ENCODE measurements at regions of chr19 and their contacts with region 1.

Region 1: GRCh38 chr19:10653715-10654492 is at the start of gene ILF3:
- DNase-seq: peak; percentile 100
- ATAC-seq: peak; percentile 80
- H3K4me3 ChIP-seq: peak within 1 kb of the TSS; percentile 67 to 100 (median 96)
- H3K4me3 Mint-ChIP-seq: peak within 1 kb of the TSS; percentile 98
- H3K27ac ChIP-seq: peak within 1 kb of the TSS; percentile 99 to 100
- H3K27ac Mint-ChIP-seq: peak within 1 kb of the TSS; percentile 100
- H3K4me1 ChIP-seq: peaks cover 28 to 35% of the 10 kb centered on the region in 2 donors
- H3K4me1 Mint-ChIP-seq: peaks cover 42% of the 10 kb centered on the region
- H3K27me3 ChIP-seq: no peaks in the 10 kb centered on the region
- H3K27me3 Mint-ChIP-seq: no peaks in the 10 kb centered on the region
- CTCF ChIP-seq: no peak
- total RNA-seq, gene ILF3: 359 and 378 TPM in 2 replicates

Region 2: DNA sequence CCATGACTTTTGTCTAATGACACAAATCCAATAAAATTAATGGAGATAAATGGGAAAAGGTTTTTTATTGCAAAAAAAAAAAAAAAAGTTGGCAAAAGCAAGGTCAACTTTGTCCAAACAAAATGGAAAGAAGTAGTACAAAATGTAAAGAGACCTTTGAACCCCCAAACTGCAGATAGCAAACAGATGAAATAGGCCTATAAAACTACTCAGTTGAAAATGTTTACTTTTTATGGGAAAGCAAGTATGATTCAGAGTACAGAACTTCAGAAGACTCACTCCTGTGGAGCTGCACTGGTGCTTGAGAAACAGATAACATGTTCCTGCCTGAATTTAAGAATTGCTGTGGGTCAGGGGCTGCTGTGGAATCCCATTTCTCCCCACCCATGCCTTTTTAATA is 1300.9 kb before region 1 on chr19:
- CTCF ChIA-PET with region 1: no interaction called
- POLR2A ChIA-PET with region 1: no interaction called
- intact Hi-C with region 1: no loop called
- DNase-seq: no peak
- ATAC-seq: no peak
- H3K4me3 ChIP-seq: no peak overlapping the region
- H3K4me3 Mint-ChIP-seq: no peak overlapping the region
- H3K27ac ChIP-seq: no peak overlapping the region
- H3K27ac Mint-ChIP-seq: no peak overlapping the region
- H3K4me1 ChIP-seq: no peaks in the 10 kb centered on the region
- H3K4me1 Mint-ChIP-seq: no peaks in the 10 kb centered on the region
- H3K27me3 ChIP-seq: no peaks in the 10 kb centered on the region
- H3K27me3 Mint-ChIP-seq: no peaks in the 10 kb centered on the region
- CTCF ChIP-seq: no peak

Region 3: DNA sequence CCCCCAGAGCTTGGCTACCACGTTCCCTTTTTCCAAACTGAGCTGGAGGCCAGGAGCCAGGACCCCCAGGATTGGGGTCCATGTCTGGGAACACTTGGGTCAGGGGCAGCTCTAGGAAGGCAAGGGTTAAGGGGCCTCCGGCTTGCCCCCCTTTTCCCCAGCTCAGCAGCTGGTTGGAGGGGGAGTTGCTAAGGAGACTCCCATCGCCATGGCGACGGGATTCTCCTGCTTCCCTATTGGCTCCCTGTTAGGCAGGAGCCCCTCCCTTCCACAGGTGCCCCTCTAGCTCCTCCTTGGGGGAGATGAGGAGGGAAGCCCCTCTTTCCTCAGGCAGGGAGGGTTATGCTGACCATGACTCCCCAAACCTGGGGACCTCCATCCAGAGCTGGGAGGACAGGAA is 199.6 kb before region 1 on chr19:
- CTCF ChIA-PET with region 1: no interaction called
- POLR2A ChIA-PET with region 1: no interaction called
- intact Hi-C with region 1: no loop called
- DNase-seq: no peak
- ATAC-seq: no peak
- H3K4me3 ChIP-seq: no peak overlapping the region
- H3K4me3 Mint-ChIP-seq: no peak overlapping the region
- H3K27ac ChIP-seq: no peak overlapping the region
- H3K27ac Mint-ChIP-seq: no peak overlapping the region
- H3K4me1 ChIP-seq: no peaks in the 10 kb centered on the region
- H3K4me1 Mint-ChIP-seq: no peaks in the 10 kb centered on the region
- H3K27me3 ChIP-seq: peaks cover 0 to 9% (median 0%) of the 10 kb centered on the region in 4 experiments
- H3K27me3 Mint-ChIP-seq: peaks cover 9% of the 10 kb centered on the region
- CTCF ChIP-seq: no peak

Region 4: DNA sequence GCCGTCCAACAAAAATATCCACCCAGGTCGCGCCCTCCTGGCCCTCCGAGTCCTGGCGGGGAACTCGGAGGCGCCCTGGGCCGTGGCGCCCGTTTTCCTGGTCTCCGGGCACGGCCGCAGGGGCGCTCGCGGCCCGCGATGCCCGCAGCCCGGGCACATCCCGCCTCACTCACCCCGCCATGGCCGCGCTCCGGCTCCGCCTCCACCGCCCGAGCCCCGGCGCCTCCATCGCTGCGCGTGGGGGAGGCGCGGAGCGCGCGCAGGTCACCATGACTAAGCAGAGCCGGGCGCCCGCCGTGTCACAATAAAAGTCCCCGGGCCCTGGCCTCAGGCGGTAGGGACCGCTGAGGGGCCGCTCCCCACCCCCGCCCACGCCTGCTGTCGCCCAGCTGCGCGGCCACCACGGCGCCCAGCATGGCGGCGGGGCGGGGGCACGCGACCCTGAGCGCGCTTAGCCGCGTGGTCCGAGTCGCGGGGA is 151.3 kb before region 1 on chr19:
- CTCF ChIA-PET with region 1: no interaction called
- POLR2A ChIA-PET with region 1: no interaction called
- intact Hi-C with region 1: loop called (anchors 1 kb)
- DNase-seq: peak; percentile 87
- ATAC-seq: peak; percentile 87
- H3K4me3 ChIP-seq: peak overlapping the region in 4 of 5 experiments; percentile 72 to 87 (median 78)
- H3K4me3 Mint-ChIP-seq: peak overlapping the region; percentile 88
- H3K27ac ChIP-seq: peak overlapping the region; percentile 63 to 69
- H3K27ac Mint-ChIP-seq: peak overlapping the region; percentile 85
- H3K4me1 ChIP-seq: peaks cover 6 to 18% of the 10 kb centered on the region in 2 donors
- H3K4me1 Mint-ChIP-seq: peaks cover 22% of the 10 kb centered on the region
- H3K27me3 ChIP-seq: no peaks in the 10 kb centered on the region
- H3K27me3 Mint-ChIP-seq: no peaks in the 10 kb centered on the region
- CTCF ChIP-seq: no peak

Region 5: GRCh38 chr19:10679743-10680142 is 25.8 kb after region 1 on chr19:
- CTCF ChIA-PET with region 1: no interaction called
- POLR2A ChIA-PET with region 1: no interaction called
- intact Hi-C with region 1: no loop called
- DNase-seq: no peak
- ATAC-seq: no peak
- H3K4me3 ChIP-seq: no peak overlapping the region
- H3K4me3 Mint-ChIP-seq: no peak overlapping the region
- H3K27ac ChIP-seq: no peak overlapping the region
- H3K27ac Mint-ChIP-seq: no peak overlapping the region
- H3K4me1 ChIP-seq: no peaks in the 10 kb centered on the region
- H3K4me1 Mint-ChIP-seq: no peaks in the 10 kb centered on the region
- H3K27me3 ChIP-seq: no peaks in the 10 kb centered on the region
- H3K27me3 Mint-ChIP-seq: no peaks in the 10 kb centered on the region
- CTCF ChIP-seq: no peak

Region 6: DNA sequence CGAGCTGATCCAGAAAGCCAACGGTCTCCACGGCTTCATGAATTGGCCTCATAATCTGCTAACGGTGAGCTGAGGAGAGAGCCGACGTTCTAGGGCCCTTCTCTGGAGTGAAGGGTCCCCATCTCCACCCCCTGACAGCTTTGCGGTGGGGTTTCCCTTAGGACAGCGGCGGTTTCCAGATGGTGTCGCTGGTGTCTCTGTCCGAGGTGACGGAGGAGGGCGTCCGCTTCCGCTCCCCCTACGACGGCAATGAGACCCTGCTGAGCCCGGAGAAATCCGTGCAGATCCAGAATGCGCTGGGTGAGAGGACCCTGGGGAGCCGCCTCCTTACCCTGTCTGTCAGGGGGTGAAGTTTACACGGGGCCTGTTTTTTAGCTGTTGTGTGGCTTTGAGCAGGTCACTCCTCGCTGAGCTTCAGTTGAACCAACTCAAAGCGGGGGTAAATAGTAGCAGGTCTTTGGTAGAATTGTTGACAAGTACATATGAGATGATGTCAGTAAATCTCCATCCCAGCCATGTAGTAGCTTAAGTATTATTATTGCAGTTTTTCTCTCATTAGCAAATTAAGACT is 48.1 kb after region 1 on chr19:
- CTCF ChIA-PET with region 1: interaction called, 6 read pairs
- POLR2A ChIA-PET with region 1: no interaction called
- intact Hi-C with region 1: loop called (anchors 1 kb)
- DNase-seq: peak; percentile 53
- ATAC-seq: peak; percentile 34
- H3K4me3 ChIP-seq: peak overlapping the region; percentile 51 to 96 (median 88)
- H3K4me3 Mint-ChIP-seq: peak overlapping the region; percentile 98
- H3K27ac ChIP-seq: peak overlapping the region in 1 of 2 donors; percentile 66
- H3K27ac Mint-ChIP-seq: peak overlapping the region; percentile 93
- H3K4me1 ChIP-seq: peaks cover 5 to 14% of the 10 kb centered on the region in 2 donors
- H3K4me1 Mint-ChIP-seq: peaks cover 12% of the 10 kb centered on the region
- H3K27me3 ChIP-seq: no peaks in the 10 kb centered on the region
- H3K27me3 Mint-ChIP-seq: no peaks in the 10 kb centered on the region
- CTCF ChIP-seq: no peak

Region 7: GRCh38 chr19:10835754-10836477 is 182.0 kb after region 1 on chr19 and contains the start of gene TMED1:
- CTCF ChIA-PET with region 1: no interaction called
- POLR2A ChIA-PET with region 1: no interaction called
- intact Hi-C with region 1: loop called (anchors 1 kb)
- DNase-seq: peak; percentile 97
- ATAC-seq: peak; percentile 85
- H3K4me3 ChIP-seq: peak within 1 kb of the TSS; percentile 64 to 97 (median 94)
- H3K4me3 Mint-ChIP-seq: peak within 1 kb of the TSS; percentile 96
- H3K27ac ChIP-seq: peak within 1 kb of the TSS; percentile 95 to 97
- H3K27ac Mint-ChIP-seq: peak within 1 kb of the TSS; percentile 100
- H3K4me1 ChIP-seq: peaks cover 7 to 17% of the 10 kb centered on the region in 2 donors
- H3K4me1 Mint-ChIP-seq: peaks cover 14% of the 10 kb centered on the region
- H3K27me3 ChIP-seq: no peaks in the 10 kb centered on the region
- H3K27me3 Mint-ChIP-seq: no peaks in the 10 kb centered on the region
- CTCF ChIP-seq: no peak
- total RNA-seq, gene TMED1: 13.1 and 14.7 TPM in 2 replicates

Measured in B cell (primary cell).